ENCODE measurements at regions of chrX and their contacts with region 1.

Region 1: DNA sequence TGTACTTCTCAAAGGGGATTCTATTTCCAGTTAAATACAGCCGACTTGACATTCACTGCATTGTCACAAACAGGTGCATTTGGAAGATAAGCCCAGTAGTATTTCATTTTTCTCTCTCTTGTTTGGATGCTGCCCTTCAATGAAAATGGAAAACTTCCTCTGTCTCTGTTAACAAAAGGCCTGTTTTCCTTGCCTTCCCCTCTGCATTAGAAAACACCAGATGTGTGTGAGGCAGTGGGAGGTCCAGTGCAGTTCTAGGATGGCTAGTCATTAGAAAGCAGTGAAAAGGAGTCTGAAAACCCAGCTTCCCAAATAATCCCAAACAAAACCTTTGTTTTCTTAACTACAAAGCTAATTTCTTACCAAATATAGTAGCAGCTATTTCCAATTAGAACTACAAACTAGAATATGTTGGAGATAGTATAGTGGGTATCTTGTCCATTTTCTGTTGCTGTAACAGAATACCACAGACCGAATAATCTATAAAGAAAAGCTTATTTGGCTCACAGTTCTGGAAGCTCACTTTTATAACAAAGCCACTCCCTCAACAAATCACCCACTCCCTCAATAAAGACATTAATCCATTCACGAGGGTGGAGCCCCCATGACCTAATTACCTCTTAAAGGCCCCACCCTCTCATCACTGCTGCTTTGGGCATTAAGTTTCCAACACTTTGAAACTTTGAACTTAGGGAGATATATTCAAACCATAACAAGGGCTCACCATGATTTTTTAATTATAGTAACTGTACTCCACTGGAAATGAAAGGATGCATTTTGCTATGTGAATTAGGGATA is 452.1 kb upstream of the RPS6KA3 start:
- DNase-seq: no peak
- H3K4me3 ChIP-seq: no peak overlapping the region
- H3K27ac ChIP-seq: peak overlapping the region in 44 of 59 donors; percentile 0 to 80 (median 46)
- H3K27me3 ChIP-seq: peaks cover 0 to 44% (median 4%) of the 10 kb centered on the region in 45 donors
- CTCF ChIP-seq: no peak

Region 2: DNA sequence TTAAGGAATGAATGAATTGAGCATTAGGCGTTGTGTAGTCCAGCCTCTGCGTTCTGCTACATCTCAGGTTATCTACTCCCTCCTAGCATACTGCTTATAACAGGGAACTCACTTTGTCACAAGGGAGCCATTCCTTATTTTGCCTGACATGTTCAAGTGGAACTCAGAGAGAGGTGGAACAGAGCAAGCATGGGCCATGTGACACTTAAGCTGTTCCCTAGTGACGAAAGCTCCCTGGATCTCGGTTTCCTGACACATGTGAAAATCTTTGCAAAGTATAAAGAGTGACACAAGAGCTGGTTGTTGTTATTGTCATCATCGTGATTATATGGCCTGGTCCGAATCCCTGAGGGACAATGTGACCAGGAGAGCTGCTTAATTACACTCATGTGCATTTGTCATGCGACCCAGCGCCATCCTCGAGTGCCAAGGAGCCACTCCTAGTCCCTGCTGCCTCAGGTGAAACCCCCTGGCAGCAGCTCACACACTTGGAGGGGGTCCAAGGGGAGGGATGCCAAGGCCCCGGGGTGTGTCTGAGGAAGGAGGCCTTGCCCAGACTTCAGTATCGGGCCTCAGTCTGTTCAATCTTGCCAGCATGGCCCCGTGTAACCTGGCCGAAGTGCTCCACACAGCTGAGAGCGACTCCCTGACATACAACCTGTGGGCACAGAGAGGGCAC is 1105.0 kb before region 1 on chrX:
- intact Hi-C with region 1: no loop called
- DNase-seq: peak in 1 of 10 donors; percentile 6
- H3K4me3 ChIP-seq: no peak overlapping the region
- H3K27ac ChIP-seq: no peak overlapping the region
- H3K27me3 ChIP-seq: peaks cover 0 to 43% (median 6%) of the 10 kb centered on the region in 45 donors
- CTCF ChIP-seq: no peak

Region 3: GRCh38 chrX:20571611-20572010 is 147.2 kb before region 1 on chrX:
- intact Hi-C with region 1: no loop called
- DNase-seq: no peak
- H3K4me3 ChIP-seq: no peak overlapping the region
- H3K27ac ChIP-seq: peak overlapping the region in 2 of 59 donors; percentile 19 to 21
- H3K27me3 ChIP-seq: peaks cover 0 to 59% (median 9%) of the 10 kb centered on the region in 45 donors
- CTCF ChIP-seq: no peak

Region 4: GRCh38 chrX:20653070-20653469 is 65.7 kb before region 1 on chrX:
- intact Hi-C with region 1: no loop called
- DNase-seq: no peak
- H3K4me3 ChIP-seq: no peak overlapping the region
- H3K27ac ChIP-seq: no peak overlapping the region
- H3K27me3 ChIP-seq: peaks cover 0 to 29% (median 0%) of the 10 kb centered on the region in 45 donors
- CTCF ChIP-seq: no peak

Region 5: GRCh38 chrX:20857746-20858145 is 139.0 kb after region 1 on chrX:
- intact Hi-C with region 1: loop called in 1 of 2 experiments (anchors 10 kb)
- DNase-seq: peak in 4 of 10 donors; percentile 40 to 51 (median 42)
- H3K4me3 ChIP-seq: no peak overlapping the region
- H3K27ac ChIP-seq: peak overlapping the region in 44 of 59 donors; percentile 6 to 82 (median 59)
- H3K27me3 ChIP-seq: peaks cover 0 to 6% (median 0%) of the 10 kb centered on the region in 45 donors
- CTCF ChIP-seq: no peak